Mucosa of descending colon (tissue), 3 donors: ENCODE measurements at regions of chr10 and their contacts with region 1.

Region 1: GRCh38 chr10:59240582-59241183 is 64.2 kb downstream of the PHYHIPL start:
- DNase-seq: peak in 1 of 3 donors; percentile 42
- ATAC-seq: no peak
- H3K4me3 ChIP-seq: no peak overlapping the region
- H3K4me1 ChIP-seq: no peaks in the 10 kb centered on the region
- CTCF ChIP-seq: no peak

Region 2: GRCh38 chr10:59611043-59611442 is 370.4 kb after region 1 on chr10:
- intact Hi-C with region 1: loop called in 1 of 2 experiments (anchors 10 kb)
- DNase-seq: no peak
- ATAC-seq: no peak
- H3K4me3 ChIP-seq: no peak overlapping the region
- H3K4me1 ChIP-seq: peaks cover 13% of the 10 kb centered on the region
- CTCF ChIP-seq: no peak